ENCODE measurements at regions of chr7 and their contacts with region 1.

Region 1: GRCh38 chr7:130758429-130759056 is 24.5 kb upstream of the KLF14 start:
- DNase-seq: peak in 1 of 35 experiments; percentile 71
- ATAC-seq: peak in 2 of 4 experiments; percentile 36 to 45
- H3K4me3 ChIP-seq: no peak overlapping the region
- H3K4me3 Mint-ChIP-seq: no peak overlapping the region
- H3K27ac ChIP-seq: no peak overlapping the region
- H3K27ac Mint-ChIP-seq: no peak overlapping the region
- H3K4me1 ChIP-seq: no peaks in the 10 kb centered on the region
- H3K4me1 Mint-ChIP-seq: no peaks in the 10 kb centered on the region
- H3K27me3 ChIP-seq: no peaks in the 10 kb centered on the region
- H3K27me3 Mint-ChIP-seq: peaks cover 3 to 8% of the 10 kb centered on the region in 2 donors

Region 2: DNA sequence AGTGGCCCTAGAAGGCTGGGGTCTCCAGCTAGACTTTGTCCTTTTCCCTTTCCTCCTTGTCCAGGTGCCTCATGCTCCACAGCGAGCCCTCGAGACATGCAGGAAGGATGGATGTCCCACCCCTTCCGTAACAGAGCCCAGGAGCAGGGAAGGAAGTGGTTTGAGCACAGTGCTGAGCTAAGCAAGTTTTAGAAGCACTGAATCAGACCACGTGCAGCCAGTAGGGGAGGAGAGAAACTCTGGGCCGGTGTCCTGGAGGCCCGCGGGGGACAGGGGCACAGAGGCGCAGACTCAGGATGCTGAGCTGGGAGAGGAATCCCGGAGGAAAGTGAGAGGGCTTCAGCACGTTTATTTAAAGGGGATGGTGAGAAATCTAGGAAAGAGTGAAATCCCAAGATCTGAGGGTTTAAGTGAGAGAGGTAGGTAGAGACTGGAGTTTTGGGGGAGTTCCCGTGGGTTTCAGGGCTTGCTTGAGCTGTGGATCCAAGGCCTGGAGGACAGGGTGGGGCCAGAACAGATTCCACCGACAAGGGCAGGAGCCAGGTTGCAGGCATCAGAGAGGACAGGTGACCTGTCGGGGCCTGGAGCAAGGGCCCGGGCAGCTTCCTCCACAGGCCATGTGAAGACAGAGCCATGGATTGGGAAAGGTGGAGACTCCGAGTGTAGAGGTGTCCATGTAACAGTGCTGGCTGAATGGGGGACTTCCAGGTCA is 1825.2 kb before region 1 on chr7:
- CTCF ChIA-PET with region 1: no interaction called
- POLR2A ChIA-PET with region 1: no interaction called
- DNase-seq: peak in 14 of 35 experiments; percentile 14 to 59 (median 24)
- ATAC-seq: peak; percentile 83 to 93 (median 90)
- H3K4me3 ChIP-seq: peak overlapping the region in 1 of 2 donors; percentile 24
- H3K4me3 Mint-ChIP-seq: peak overlapping the region; percentile 38 to 68 (median 63)
- H3K27ac ChIP-seq: peak overlapping the region; percentile 38
- H3K27ac Mint-ChIP-seq: peak overlapping the region; percentile 88 to 89
- H3K4me1 ChIP-seq: peaks cover 7 to 23% of the 10 kb centered on the region in 2 experiments
- H3K4me1 Mint-ChIP-seq: peaks cover 18 to 33% (median 23%) of the 10 kb centered on the region in 3 donors
- H3K27me3 ChIP-seq: peaks cover 0 to 38% of the 10 kb centered on the region in 2 experiments
- H3K27me3 Mint-ChIP-seq: peaks cover 8 to 9% of the 10 kb centered on the region in 2 donors

Region 3: DNA sequence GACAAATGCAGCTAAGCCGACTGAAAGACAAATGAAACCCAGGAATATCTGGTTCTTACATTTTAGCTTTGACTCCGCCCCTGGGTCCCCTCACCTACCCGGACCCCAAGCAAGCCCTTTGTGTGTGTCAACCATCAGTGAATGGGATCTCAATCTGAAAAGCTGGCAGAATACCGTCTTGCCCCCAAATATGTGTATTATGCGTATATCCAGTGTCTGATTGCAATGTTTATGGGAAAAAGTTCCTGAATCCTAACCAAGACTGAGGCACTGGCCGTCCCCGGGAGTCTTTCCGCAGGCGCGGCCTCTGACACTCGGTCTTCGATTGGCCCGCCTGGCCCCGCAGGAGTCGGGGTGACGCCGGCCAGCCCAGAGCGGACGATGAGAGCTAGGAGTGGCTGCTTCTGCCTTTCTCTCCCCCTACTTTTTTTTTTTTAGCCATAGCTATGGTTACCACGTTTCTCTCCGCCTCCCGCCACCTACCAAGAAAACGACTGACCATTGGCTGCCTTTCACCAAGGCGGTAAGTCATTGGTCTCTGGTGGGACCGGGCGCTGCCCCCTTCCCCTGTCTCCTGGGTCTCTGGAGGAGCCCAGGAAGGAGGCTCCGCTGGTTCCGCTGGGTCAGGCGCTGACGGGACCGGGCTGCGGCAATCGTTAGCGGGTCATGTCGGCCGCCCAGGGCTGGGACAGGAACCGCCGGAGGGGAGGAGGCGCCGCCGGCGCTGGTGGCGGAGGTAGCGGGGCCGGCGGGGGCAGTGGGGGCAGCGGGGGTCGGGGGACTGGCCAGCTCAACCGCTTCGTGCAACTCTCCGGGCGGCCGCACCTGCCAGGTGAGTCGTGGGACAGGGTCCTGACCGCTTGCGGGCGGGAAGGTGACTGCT is 688.3 kb before region 1 on chr7 and contains the start of gene KLHDC10:
- CTCF ChIA-PET with region 1: interaction called, 10 to 55 read pairs
- POLR2A ChIA-PET with region 1: interaction called in 1 of 2 experiments, 3 read pairs
- DNase-seq: peak; percentile 85 to 98 (median 96)
- ATAC-seq: peak; percentile 93 to 96 (median 94)
- H3K4me3 ChIP-seq: peak within 1 kb of the TSS; percentile 59 to 74
- H3K4me3 Mint-ChIP-seq: peak within 1 kb of the TSS; percentile 89 to 92 (median 91)
- H3K27ac ChIP-seq: peak within 1 kb of the TSS; percentile 77
- H3K27ac Mint-ChIP-seq: peak within 1 kb of the TSS; percentile 89 to 92
- H3K4me1 ChIP-seq: peaks cover 13 to 21% of the 10 kb centered on the region in 2 experiments
- H3K4me1 Mint-ChIP-seq: peaks cover 47 to 53% (median 48%) of the 10 kb centered on the region in 3 donors
- H3K27me3 ChIP-seq: peaks cover 0 to 13% of the 10 kb centered on the region in 2 experiments
- H3K27me3 Mint-ChIP-seq: no peaks in the 10 kb centered on the region
- total RNA-seq, gene KLHDC10: 15.2 to 20.5 (median 16.4) TPM

Region 4: GRCh38 chr7:130242198-130243014 is 516.1 kb before region 1 on chr7:
- CTCF ChIA-PET with region 1: interaction called, 9 to 30 read pairs
- POLR2A ChIA-PET with region 1: no interaction called
- DNase-seq: peak in 33 of 35 experiments; percentile 14 to 70 (median 41)
- ATAC-seq: peak; percentile 58 to 74 (median 70)
- H3K4me3 ChIP-seq: no peak overlapping the region
- H3K4me3 Mint-ChIP-seq: no peak overlapping the region
- H3K27ac ChIP-seq: no peak overlapping the region
- H3K27ac Mint-ChIP-seq: no peak overlapping the region
- H3K4me1 ChIP-seq: no peaks in the 10 kb centered on the region
- H3K4me1 Mint-ChIP-seq: peaks cover 0 to 7% (median 0%) of the 10 kb centered on the region in 3 donors
- H3K27me3 ChIP-seq: peaks cover 0 to 3% of the 10 kb centered on the region in 2 experiments
- H3K27me3 Mint-ChIP-seq: peaks cover 0 to 5% of the 10 kb centered on the region in 2 donors